Posterior vena cava (tissue), 2 donors: ENCODE measurements at regions of chr16 and their contacts with region 1.

Region 1: GRCh38 chr16:54285414-54286089 is 1.0 kb downstream of the IRX3 start:
- DNase-seq: no peak

Region 2: DNA sequence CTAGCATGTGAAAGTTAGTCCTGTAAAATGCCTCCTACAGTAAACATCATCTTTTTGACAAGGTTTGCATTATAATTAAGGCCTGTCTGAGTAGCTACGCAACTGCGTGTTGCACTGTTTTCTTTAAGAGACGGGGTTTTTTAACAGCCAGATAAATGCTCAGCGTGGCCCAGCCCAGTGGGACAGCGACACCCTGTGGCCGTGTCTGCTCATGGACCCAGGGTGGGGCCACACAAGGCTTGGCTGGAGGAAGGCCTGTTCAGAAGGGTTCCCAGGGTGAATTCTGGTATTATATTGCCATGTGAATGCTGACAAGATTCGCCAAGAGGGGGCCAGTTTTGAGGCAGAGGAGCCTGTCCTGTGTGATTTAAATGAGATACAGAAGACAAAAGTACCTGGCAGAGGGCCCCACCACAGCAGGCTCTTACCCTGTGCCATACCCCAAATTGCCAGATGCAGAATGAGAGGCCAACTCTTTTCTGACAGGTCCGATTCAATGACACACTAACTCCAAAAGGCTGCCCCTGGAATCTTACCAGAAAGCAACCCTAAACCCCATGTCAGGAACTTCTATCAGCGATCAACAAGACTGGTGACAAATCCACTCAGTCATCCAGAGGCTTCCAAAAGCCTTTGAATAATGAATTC is 972.5 kb after region 1 on chr16:
- intact Hi-C with region 1: loop called in 1 of 2 experiments (anchors 2 kb)
- DNase-seq: peak; percentile 88